ENCODE measurements at regions of chr17 and their contacts with region 1.

Region 1: DNA sequence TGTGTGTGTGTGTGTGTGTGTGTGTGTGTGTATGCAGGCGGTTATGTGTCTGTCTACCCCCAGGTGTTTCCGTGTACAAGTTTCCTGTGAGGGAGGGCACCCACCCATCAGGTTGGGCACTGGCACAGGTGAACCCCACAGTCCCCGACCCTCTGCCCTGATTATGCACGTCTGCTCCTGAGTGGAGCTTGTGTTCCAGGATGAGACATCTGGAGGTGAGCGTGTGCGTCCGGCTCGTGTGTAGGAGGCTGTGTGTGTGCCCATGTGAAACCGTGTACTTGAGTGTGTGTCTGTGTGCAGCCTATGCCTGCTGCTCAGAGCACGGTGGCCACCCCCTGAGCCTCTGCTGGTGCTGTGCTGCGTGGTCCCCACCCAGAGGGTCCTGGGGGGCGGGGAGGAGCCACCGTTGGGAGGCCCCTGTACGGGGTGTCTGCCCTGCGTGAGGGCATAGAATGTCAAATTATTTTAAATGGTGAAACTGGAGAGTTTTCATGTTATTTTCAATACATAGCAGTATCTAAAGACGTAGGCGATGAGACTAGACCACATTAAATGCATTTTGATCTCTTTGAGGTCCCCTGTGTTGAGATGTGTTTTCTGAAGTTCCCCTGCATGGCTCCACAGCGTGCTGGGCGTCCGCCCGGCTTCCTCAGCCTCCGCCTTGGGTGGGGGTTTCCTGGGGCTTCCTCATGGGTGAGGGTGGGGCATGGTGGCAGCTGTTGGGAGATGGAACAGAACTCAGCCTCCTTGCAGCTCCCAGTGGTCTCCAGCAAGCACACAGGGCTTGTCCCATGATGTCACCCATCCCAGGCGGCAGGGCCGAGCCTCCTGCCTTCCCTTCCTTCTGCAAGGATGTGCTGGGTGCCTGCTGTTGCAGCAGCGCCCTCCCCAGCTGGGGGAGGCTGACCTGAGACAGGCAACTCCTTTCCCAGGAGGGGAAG is 43.4 kb downstream of the KCNJ12 start:
- DNase-seq: no peak
- ATAC-seq: no peak
- H3K4me3 ChIP-seq: no peak overlapping the region
- H3K27ac ChIP-seq: no peak overlapping the region
- H3K4me1 ChIP-seq: no peaks in the 10 kb centered on the region
- H3K27me3 ChIP-seq: peaks cover 7 to 32% of the 10 kb centered on the region in 2 experiments; a peak in 4 of 5 replicates
- CTCF ChIP-seq: no peak
- EP300 ChIP-seq: no peak
- POLR2A ChIP-seq: no peak
- RAD21 ChIP-seq: no peak

Region 2: DNA sequence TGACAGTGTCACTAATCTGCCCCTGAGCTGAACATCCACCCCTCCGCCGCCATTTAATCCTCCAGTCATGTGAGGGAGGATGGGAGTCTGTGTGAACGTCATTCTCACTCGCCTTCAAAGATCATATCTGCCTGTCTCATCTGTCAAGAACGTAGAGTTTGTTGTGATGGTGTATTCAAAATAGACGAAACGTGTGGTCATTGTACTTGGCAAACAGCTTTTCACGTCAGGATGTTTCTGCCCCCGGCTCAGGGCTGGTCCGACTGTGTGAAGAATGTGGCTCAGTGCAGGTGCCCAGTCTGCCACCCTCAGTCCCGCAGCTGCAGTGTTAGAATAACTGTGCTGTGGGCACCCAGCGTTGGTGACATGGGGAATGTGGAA is 104.6 kb after region 1 on chr17:
- CTCF ChIA-PET with region 1: no interaction called
- POLR2A ChIA-PET with region 1: no interaction called
- in situ Hi-C with region 1: no loop called
- intact Hi-C with region 1: no loop called
- DNase-seq: no peak
- ATAC-seq: no peak
- H3K4me3 ChIP-seq: no peak overlapping the region
- H3K27ac ChIP-seq: no peak overlapping the region
- H3K4me1 ChIP-seq: no peaks in the 10 kb centered on the region
- H3K27me3 ChIP-seq: peaks cover 1 to 17% of the 10 kb centered on the region in 2 experiments; a peak in 3 of 5 replicates
- CTCF ChIP-seq: no peak
- EP300 ChIP-seq: no peak
- POLR2A ChIP-seq: no peak
- RAD21 ChIP-seq: no peak

Region 3: DNA sequence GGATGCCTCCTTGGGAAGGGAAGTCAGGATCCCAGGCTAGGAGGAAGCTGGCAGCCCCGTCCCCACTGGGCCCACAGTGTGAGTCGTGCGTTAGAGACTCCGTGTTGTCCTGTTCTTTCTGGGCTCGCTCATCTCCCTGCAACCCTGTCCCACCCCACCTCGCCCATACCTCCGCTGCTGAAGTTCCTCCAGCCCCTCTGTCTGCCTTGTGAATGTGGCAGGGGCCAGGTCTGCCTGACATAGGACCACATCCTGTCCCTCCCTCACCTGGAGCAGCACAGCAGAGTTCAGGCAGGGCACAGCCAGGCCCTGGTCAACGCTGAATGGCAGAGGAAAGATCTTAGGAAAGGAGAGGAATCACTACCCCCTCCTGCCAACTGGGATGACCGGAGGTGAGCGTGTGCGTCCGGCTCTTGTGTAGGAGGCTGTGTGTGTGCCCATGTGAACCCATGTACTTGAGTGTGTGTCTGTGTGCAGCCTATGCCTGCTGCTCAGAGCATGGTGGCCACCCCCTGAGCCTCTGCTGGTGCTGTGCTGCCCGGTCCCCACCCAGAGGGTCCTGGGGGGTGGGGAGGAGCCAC is 285.5 kb after region 1 on chr17:
- CTCF ChIA-PET with region 1: no interaction called
- POLR2A ChIA-PET with region 1: no interaction called
- in situ Hi-C with region 1: loop called (anchors 5 kb)
- intact Hi-C with region 1: no loop called
- DNase-seq: no peak
- ATAC-seq: no peak; the same call in 2 of the 3 replicates
- H3K4me3 ChIP-seq: no peak overlapping the region
- H3K27ac ChIP-seq: no peak overlapping the region
- H3K4me1 ChIP-seq: no peaks in the 10 kb centered on the region
- H3K27me3 ChIP-seq: peaks cover 4 to 5% of the 10 kb centered on the region in 2 experiments; a peak in 3 of 5 replicates
- CTCF ChIP-seq: no peak
- EP300 ChIP-seq: no peak
- POLR2A ChIP-seq: no peak
- RAD21 ChIP-seq: no peak